Posterior vena cava (tissue), 2 donors: ENCODE measurements at regions of chr10 and their contacts with region 1.

Region 1: GRCh38 chr10:71212318-71213126 is at the start of gene UNC5B:
- DNase-seq: peak; percentile 97
- total RNA-seq, gene UNC5B: 7.1 to 8.4 TPM

Region 2: GRCh38 chr10:70925377-70926225 is 286.9 kb before region 1 on chr10:
- intact Hi-C with region 1: loop called (anchors 1 to 5 kb)
- DNase-seq: peak; percentile 88

Region 3: GRCh38 chr10:71257319-71257997 is 44.9 kb after region 1 on chr10:
- intact Hi-C with region 1: loop called in 1 of 2 experiments (anchors 1 kb)
- DNase-seq: no peak